K562 (cell line): ENCODE measurements at regions of chr14 and their contacts with region 1.

Region 1: GRCh38 chr14:89040460-89041259 is 216.2 kb downstream of the TTC8 start:
- DNase-seq: peak; percentile 51 to 66 (median 54)
- ATAC-seq: peak; percentile 92
- H3K4me3 ChIP-seq: no peak overlapping the region
- H3K27ac ChIP-seq: no peak overlapping the region
- H3K4me1 ChIP-seq: peaks cover 0 to 3% of the 10 kb centered on the region in 2 experiments; a peak in 2 of 5 replicates
- H3K27me3 ChIP-seq: no peaks in the 10 kb centered on the region
- CTCF ChIP-seq: peak; percentile 76 to 88 (median 81)
- EP300 ChIP-seq: no peak
- POLR2A ChIP-seq: no peak
- RAD21 ChIP-seq: peak; percentile 66 to 86

Region 2: DNA sequence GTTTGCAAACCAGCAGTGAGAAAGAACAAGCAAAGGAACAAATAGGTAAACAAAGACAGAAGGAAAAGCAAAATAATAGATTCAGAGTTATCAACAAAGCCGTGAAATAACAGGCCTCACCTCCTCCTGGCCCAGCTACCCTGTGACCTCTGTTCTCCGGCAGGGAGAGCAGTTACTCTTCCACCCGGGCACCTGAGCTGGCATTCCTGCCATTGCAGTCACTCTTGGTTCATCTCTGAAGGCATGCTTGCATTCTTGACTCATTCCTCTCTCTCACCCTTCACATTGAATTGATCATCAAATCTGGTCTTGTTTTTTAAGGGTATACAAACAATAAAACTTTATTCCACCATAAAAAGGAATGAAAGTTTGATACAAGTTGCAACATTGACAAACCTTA is 121.2 kb before region 1 on chr14:
- CTCF ChIA-PET with region 1: no interaction called
- POLR2A ChIA-PET with region 1: no interaction called
- in situ Hi-C with region 1: no loop called
- intact Hi-C with region 1: no loop called
- DNase-seq: no peak
- ATAC-seq: no peak
- H3K4me3 ChIP-seq: no peak overlapping the region
- H3K27ac ChIP-seq: no peak overlapping the region
- H3K4me1 ChIP-seq: no peaks in the 10 kb centered on the region
- H3K27me3 ChIP-seq: no peaks in the 10 kb centered on the region; a peak in 1 of 5 replicates
- CTCF ChIP-seq: no peak
- EP300 ChIP-seq: no peak
- POLR2A ChIP-seq: no peak
- RAD21 ChIP-seq: no peak

Region 3: GRCh38 chr14:89178802-89179535 is 138.3 kb after region 1 on chr14:
- CTCF ChIA-PET with region 1: no interaction called
- POLR2A ChIA-PET with region 1: no interaction called
- in situ Hi-C with region 1: no loop called
- intact Hi-C with region 1: loop called (anchors 5 kb)
- DNase-seq: no peak
- ATAC-seq: no peak
- H3K4me3 ChIP-seq: no peak overlapping the region
- H3K27ac ChIP-seq: no peak overlapping the region
- H3K4me1 ChIP-seq: no peaks in the 10 kb centered on the region; a peak in 1 of 5 replicates
- H3K27me3 ChIP-seq: peaks cover 2 to 27% of the 10 kb centered on the region in 2 experiments; a peak in 4 of 5 replicates
- CTCF ChIP-seq: no peak
- EP300 ChIP-seq: no peak
- POLR2A ChIP-seq: no peak
- RAD21 ChIP-seq: no peak

Region 4: DNA sequence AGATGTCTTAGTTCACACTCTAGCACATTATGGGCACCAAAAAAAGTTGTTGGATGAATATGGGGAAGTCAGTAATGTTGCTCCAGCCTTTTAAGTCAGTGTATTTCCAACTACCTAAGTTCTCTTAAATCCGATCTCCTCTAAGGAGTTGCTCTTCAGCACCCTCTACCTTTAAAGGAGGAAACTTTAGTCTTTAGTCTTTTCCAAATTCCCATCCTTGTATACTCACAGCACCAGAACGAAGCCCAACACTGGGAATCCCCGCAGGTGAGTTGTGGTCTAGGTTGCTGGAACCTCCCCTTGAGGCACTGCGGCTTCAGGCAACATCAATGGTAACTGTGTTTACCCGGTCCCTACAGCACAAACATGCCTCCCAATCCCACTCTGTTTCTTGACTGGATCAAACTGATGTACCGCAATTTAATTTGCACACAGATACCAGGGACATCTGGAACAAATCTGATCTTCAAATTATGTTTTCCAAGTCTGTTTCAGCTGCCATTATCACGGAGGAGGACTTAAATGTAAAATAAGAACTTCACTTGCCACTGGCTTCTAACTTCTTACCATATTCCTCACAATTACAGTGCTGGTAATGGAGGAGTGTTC is 197.4 kb after region 1 on chr14:
- CTCF ChIA-PET with region 1: no interaction called
- POLR2A ChIA-PET with region 1: no interaction called
- in situ Hi-C with region 1: no loop called
- intact Hi-C with region 1: loop called (anchors 5 kb)
- DNase-seq: peak in 1 of 4 experiments; percentile 4
- ATAC-seq: no peak
- H3K4me3 ChIP-seq: no peak overlapping the region
- H3K27ac ChIP-seq: no peak overlapping the region
- H3K4me1 ChIP-seq: no peaks in the 10 kb centered on the region
- H3K27me3 ChIP-seq: no peaks in the 10 kb centered on the region; a peak in 2 of 5 replicates
- CTCF ChIP-seq: peak; percentile 4 to 43 (median 29); a peak in 2 of 6 replicates
- EP300 ChIP-seq: no peak
- POLR2A ChIP-seq: no peak
- RAD21 ChIP-seq: peak in 1 of 2 experiments; percentile 42; a peak in 2 of 4 replicates